ENCODE measurements at regions of chr3 and their contacts with region 1.

Region 1: DNA sequence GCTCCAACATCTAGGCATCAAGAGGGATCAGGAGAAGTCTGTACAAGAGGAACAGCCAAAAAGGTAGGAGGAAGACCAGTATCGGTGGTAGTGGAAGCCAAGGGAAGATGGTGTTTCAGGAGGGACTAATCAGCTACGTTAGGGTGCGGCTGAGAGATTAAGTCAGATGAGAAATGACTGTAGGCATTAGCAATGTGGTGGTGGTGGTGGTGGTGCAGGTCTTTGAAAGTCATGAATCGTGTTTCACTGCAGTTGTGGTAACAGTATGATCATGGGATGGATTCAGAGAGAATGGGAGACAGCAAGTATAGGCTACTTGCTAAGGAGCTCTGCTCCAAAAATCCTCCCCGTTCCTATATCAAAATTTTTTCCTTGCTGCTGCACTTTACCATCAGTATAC is 35.5 kb downstream of the ASTE1 start:
- DNase-seq: no peak
- H3K4me3 ChIP-seq: no peak overlapping the region
- H3K27ac ChIP-seq: no peak overlapping the region
- H3K4me1 ChIP-seq: no peaks in the 10 kb centered on the region
- H3K27me3 ChIP-seq: no peaks in the 10 kb centered on the region
- CTCF ChIP-seq: no peak

Region 2: DNA sequence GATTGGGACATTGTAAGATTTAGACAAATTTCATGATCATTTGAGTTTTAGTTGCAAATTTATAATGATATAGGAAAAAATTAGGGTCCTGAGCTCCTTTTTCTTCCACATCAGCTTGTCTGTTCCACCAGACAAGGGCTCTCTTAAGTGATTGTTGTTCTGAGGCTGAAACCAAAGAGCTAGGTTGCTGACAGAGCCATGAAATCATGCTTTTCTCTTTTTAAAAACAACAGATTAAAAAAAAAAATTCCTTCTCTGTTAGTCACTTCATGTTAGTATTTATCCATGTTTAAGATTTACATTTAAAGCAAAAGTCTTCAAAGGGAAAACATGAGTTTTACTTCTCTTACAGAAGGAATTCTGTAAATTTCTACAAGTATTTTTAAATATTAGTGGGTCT is 40.5 kb before region 1 on chr3:
- CTCF ChIA-PET with region 1: no interaction called
- POLR2A ChIA-PET with region 1: interaction called, 10 read pairs
- intact Hi-C with region 1: no loop called
- DNase-seq: no peak
- H3K4me3 ChIP-seq: no peak overlapping the region
- H3K27ac ChIP-seq: no peak overlapping the region
- H3K4me1 ChIP-seq: no peaks in the 10 kb centered on the region
- H3K27me3 ChIP-seq: no peaks in the 10 kb centered on the region
- CTCF ChIP-seq: no peak

Region 3: DNA sequence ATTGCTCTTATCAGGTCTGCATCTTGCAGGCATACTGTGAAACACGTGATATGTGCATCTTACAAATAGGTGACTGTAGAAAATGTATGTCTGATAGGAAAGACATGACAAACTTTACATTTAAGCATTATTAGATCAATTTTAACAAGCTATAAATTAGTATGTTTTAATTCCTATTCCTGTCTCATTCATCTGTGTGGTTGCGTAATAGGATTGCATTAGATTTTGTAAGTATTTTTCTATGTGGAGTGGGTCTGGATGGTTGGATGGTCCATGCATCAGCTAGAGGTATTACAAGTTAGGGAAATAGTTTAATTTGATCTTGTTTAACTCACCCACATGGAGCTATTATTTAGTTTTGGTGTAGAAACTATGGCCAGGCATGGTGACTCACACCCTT is 16.7 kb after region 1 on chr3:
- CTCF ChIA-PET with region 1: no interaction called
- POLR2A ChIA-PET with region 1: no interaction called
- intact Hi-C with region 1: no loop called
- DNase-seq: no peak
- H3K4me3 ChIP-seq: no peak overlapping the region
- H3K27ac ChIP-seq: no peak overlapping the region
- H3K4me1 ChIP-seq: no peaks in the 10 kb centered on the region
- H3K27me3 ChIP-seq: no peaks in the 10 kb centered on the region
- CTCF ChIP-seq: no peak